Sciatic nerve (tissue), 2 donors: ENCODE measurements at regions of chr2 and their contacts with region 1.

Region 1: GRCh38 chr2:11344956-11345671 is 678 bp upstream of the ROCK2 start:
- DNase-seq: peak; percentile 81
- ATAC-seq: peak; percentile 82

Region 2: DNA sequence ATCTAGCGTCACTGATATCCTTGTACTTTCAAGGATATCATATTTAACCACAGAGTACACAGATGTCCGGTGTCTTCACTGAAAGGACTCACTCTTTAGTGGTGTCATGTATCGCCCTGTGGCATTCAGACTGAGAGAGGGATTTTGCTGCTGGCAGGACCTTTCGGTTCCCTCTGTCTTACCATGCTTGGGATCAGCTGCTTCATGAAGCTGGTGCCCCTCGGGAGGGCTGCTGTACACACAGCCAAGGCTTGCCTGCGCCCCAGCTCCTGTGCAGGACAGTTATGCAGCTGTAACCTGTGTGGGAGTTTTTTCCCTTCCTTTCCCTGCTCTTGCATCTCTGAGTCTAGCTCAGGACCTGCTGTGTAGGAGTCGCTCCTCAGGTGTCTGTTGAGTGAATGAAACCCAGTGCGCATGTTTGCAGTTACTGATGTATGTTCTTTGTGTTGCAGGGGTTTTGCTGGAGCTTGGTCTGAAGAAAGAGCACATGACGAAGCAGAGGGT is 253.2 kb after region 1 on chr2:
- intact Hi-C with region 1: no loop called
- DNase-seq: no peak
- ATAC-seq: no peak

Region 3: GRCh38 chr2:12674644-12675328 is 1329.7 kb after region 1 on chr2:
- intact Hi-C with region 1: loop called (anchors 5 kb)
- DNase-seq: no peak
- ATAC-seq: no peak